Activated CD4-positive, alpha-beta T cell treated with anti-CD3 and anti-CD28 coated beads for 36 hours (primary cell): ENCODE measurements at regions of chr7 and their contacts with region 1.

Region 1: DNA sequence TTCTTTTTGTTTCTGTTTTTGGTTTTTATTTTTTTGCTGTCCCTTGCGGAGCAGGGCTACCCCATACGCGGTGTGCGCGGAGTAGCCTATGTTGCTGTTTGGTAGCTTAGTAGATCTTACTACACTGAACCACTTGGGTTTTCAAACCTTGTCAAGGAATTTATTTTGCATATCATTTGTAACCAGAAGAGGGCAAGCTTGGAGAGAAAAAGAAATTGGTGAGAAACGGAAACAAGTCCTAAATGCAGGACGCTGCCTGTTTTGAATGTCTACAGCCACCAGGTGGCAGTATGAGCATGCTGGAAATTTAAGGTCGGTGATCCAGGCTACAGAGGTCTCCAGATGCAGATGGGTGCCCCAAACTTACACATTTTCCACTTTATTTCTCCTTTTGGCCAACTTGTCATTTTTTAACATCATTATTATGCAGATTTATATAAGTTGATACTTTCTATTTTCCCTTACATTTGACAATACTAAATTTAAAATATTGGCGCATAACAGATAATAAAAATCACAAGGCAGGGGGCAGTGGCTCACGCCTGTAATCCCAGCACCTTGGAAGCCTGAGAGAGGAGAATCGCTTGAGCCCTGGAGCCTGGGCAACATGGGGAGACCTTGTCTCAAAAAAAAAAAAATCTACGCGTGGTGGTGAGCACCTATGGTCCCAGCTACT is 15.3 kb upstream of the TRA2A start:
- DNase-seq: peak; percentile 83
- ATAC-seq: peak; percentile 83
- H3K4me3 Mint-ChIP-seq: no peak overlapping the region
- H3K27ac Mint-ChIP-seq: no peak overlapping the region
- H3K4me1 Mint-ChIP-seq: peaks cover 5% of the 10 kb centered on the region
- H3K27me3 Mint-ChIP-seq: peaks cover 2% of the 10 kb centered on the region

Region 2: GRCh38 chr7:23357190-23358093 is 189.6 kb before region 1 on chr7:
- CTCF ChIA-PET with region 1: interaction called, 4 read pairs
- POLR2A ChIA-PET with region 1: no interaction called
- intact Hi-C with region 1: loop called (anchors 1 to 2 kb)
- DNase-seq: no peak
- ATAC-seq: peak; percentile 42
- H3K4me3 Mint-ChIP-seq: no peak overlapping the region
- H3K27ac Mint-ChIP-seq: no peak overlapping the region
- H3K4me1 Mint-ChIP-seq: peaks cover 18% of the 10 kb centered on the region
- H3K27me3 Mint-ChIP-seq: peaks cover 7% of the 10 kb centered on the region

Region 3: GRCh38 chr7:23520582-23520981 is 26.5 kb before region 1 on chr7:
- CTCF ChIA-PET with region 1: interaction called, 20 read pairs
- POLR2A ChIA-PET with region 1: no interaction called
- intact Hi-C with region 1: no loop called
- DNase-seq: peak; percentile 52
- ATAC-seq: no peak
- H3K4me3 Mint-ChIP-seq: no peak overlapping the region
- H3K27ac Mint-ChIP-seq: no peak overlapping the region
- H3K4me1 Mint-ChIP-seq: peaks cover 42% of the 10 kb centered on the region
- H3K27me3 Mint-ChIP-seq: no peaks in the 10 kb centered on the region

Region 4: GRCh38 chr7:23696916-23697441 is 149.9 kb after region 1 on chr7:
- CTCF ChIA-PET with region 1: interaction called, 10 read pairs
- POLR2A ChIA-PET with region 1: interaction called, 8 read pairs
- intact Hi-C with region 1: no loop called
- DNase-seq: peak; percentile 74
- ATAC-seq: no peak
- H3K4me3 Mint-ChIP-seq: no peak overlapping the region
- H3K27ac Mint-ChIP-seq: no peak overlapping the region
- H3K4me1 Mint-ChIP-seq: peaks cover 2% of the 10 kb centered on the region
- H3K27me3 Mint-ChIP-seq: no peaks in the 10 kb centered on the region

Region 5: DNA sequence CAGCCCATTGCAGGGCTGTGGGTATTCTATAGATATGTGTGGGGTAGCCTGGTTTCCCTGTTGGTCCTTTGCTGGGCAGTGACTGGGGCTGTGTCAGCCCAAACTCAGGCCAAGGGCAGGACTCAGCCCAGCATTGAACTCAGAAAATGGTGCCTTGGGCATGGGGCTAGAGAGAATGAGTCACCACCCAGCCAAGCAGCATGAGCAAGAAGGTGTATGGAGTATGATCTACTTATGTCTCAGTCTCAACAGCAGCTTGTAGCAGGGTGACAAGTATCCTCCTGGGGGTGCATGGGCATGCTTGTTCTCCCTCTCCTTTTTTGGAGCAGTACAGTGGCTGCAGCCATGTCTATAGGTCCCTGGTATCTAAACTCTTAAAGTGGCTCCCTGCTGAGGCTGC is 195.0 kb after region 1 on chr7:
- CTCF ChIA-PET with region 1: no interaction called
- POLR2A ChIA-PET with region 1: no interaction called
- intact Hi-C with region 1: no loop called
- DNase-seq: no peak
- ATAC-seq: no peak
- H3K4me3 Mint-ChIP-seq: no peak overlapping the region
- H3K27ac Mint-ChIP-seq: no peak overlapping the region
- H3K4me1 Mint-ChIP-seq: no peaks in the 10 kb centered on the region
- H3K27me3 Mint-ChIP-seq: no peaks in the 10 kb centered on the region

Region 6: DNA sequence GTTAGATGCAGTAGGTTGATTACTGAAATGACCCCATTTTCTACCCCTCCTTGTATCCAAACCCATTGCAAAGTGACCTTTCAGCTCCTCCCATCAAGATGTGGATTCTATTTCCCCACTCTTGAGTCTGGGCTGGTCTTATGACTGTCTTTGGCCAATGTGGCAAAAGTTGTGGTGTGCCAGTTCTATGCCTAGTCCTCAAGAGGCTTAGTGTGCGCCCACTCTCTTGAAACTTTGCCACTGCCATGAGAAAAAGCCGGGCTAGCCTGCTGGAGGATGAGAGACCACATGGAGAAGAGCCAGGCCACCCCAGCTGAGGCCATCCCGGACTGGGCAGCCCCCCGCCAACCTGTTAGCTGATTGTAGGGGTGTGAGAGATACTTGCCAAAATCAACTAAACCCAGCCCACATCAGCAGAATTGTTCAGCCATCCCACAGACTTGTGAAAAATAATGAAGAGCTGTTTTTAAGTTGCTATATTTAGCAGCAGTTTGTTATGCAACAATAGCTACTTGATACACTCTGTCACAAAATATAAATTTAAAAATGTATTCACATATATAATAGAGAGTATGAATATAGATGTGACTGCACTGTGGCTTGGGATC is 895.2 kb after region 1 on chr7:
- CTCF ChIA-PET with region 1: no interaction called
- POLR2A ChIA-PET with region 1: no interaction called
- intact Hi-C with region 1: no loop called
- DNase-seq: no peak
- ATAC-seq: no peak
- H3K4me3 Mint-ChIP-seq: no peak overlapping the region
- H3K27ac Mint-ChIP-seq: no peak overlapping the region
- H3K4me1 Mint-ChIP-seq: peaks cover 10% of the 10 kb centered on the region
- H3K27me3 Mint-ChIP-seq: peaks cover 3% of the 10 kb centered on the region

Region 7: GRCh38 chr7:24572997-24573625 is 1026.1 kb after region 1 on chr7 and contains the start of gene PALS2:
- CTCF ChIA-PET with region 1: no interaction called
- POLR2A ChIA-PET with region 1: no interaction called
- intact Hi-C with region 1: loop called in 1 of 2 experiments (anchors 10 kb)
- DNase-seq: peak; percentile 86
- ATAC-seq: peak; percentile 68
- H3K4me3 Mint-ChIP-seq: peak within 1 kb of the TSS; percentile 88
- H3K27ac Mint-ChIP-seq: peak within 1 kb of the TSS; percentile 86
- H3K4me1 Mint-ChIP-seq: peaks cover 34% of the 10 kb centered on the region
- H3K27me3 Mint-ChIP-seq: peaks cover 12% of the 10 kb centered on the region
- total RNA-seq, gene PALS2: 20.8 to 41.7 TPM